ENCODE measurements at regions of chr2 and their contacts with region 1.

Region 1: DNA sequence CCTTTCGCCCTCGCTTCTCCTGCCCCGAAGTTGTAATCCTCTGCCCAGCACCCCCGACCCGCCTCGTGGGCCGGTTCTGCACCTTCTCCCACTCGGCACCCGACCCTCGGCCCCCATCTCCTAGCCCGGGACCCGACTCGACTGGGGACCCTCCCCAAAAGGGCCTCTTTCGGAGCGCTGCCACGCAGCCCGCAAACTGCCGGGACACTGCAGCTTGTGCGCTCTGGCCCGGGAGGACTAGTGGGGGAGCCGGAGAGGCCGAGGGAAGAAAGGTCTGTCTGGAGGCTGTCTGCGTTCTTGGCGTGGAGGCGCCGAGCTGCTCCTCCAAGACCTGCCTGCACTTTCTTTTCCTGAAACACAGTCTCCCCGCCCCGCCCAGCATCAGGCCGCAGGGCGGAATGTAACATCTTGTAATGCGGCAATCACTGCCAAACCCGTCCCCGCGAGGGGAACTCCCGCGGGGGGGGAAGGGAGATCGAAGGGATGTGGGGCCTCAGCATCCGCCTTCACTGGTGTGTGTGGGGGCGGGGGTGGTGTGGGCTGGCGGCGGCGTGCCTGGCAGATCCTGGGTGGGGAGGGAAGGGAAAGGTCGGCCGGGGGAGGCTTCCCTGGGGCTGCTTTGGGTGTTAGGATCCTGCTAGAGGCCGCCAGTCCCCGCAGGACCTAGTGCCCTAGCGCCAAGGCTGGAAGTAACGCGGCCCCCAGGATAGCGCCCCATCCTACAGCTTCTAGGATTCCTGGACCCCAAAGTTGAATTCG is 7.4 kb downstream of the DLX2 start:
- DNase-seq: peak in 3 of 7 donors; percentile 31 to 64 (median 42)
- H3K4me3 ChIP-seq: peak overlapping the region in 1 of 4 donors; percentile 45
- H3K27ac ChIP-seq: peak overlapping the region in 1 of 5 donors; percentile 45
- H3K4me1 ChIP-seq: peaks cover 21 to 42% of the 10 kb centered on the region in 2 donors
- H3K27me3 ChIP-seq: peaks cover 98% of the 10 kb centered on the region
- CTCF ChIP-seq: no peak
- POLR2A ChIP-seq: no peak

Region 2: GRCh38 chr2:171999604-172000469 is 95.5 kb before region 1 on chr2 and contains the start of gene METAP1D:
- intact Hi-C with region 1: loop called (anchors 5 kb)
- DNase-seq: peak; percentile 89 to 94 (median 93)
- H3K4me3 ChIP-seq: peak within 1 kb of the TSS; percentile 10 to 87 (median 44)
- H3K27ac ChIP-seq: peak within 1 kb of the TSS in 3 of 5 donors; percentile 2 to 77 (median 50)
- H3K4me1 ChIP-seq: peaks cover 0 to 16% of the 10 kb centered on the region in 2 donors
- H3K27me3 ChIP-seq: no peaks in the 10 kb centered on the region
- CTCF ChIP-seq: no peak
- POLR2A ChIP-seq: peak; percentile 53 to 70
- total RNA-seq, gene METAP1D: 1.7 to 21.8 (median 7.4) TPM

Measured in adrenal gland (tissue), 19 donors.